Mucosa of descending colon (tissue), 3 donors: ENCODE measurements at regions of chr6 and their contacts with region 1.

Region 1: GRCh38 chr6:33700391-33701050 is 11.0 kb downstream of the UQCC2 start:
- DNase-seq: peak; percentile 82 to 87 (median 82)
- ATAC-seq: peak; percentile 88
- H3K4me3 ChIP-seq: no peak overlapping the region
- H3K4me1 ChIP-seq: no peaks in the 10 kb centered on the region
- CTCF ChIP-seq: peak; percentile 66

Region 2: DNA sequence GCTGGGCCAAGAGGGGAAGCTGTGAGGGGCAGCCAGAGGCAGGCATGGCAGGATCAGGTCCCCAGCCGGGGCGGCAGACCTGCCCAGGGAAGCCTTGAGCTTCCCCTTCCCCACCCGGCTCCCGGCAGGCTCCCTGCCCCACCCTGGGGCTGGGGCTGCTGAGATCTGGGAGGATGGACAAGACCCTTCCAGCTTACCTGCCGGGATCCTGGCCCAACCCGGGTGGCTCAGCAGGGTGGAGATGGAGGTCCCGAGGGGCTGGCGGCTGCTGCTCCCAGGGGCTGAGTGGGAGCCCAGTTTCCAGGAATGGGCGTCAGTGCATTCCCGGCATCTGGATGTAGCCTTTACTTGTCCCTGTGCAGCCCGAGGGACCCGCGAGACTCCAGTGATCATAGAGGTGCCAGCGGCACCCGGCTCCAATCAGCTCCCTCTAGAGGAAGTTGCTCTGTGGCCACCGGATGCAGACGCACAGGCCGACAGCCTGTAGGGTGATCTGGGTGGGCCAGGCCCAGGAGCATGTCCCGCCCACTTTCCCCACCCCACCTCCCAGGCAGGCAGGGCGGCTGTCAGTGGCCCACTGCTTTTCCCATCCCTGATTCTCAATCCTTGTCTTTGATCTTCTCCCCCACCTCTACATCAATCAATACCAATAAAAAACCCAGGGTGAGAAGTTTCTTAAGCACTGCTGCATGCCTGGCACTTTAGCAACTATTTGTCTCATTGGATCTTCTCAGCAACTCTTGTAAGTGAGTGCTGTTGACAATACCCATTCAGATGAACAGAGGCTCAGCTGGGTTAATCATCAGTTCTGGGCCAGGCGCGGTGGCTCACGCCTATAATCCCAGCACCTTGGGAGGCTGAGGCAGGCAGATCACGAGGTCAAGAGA is 120.5 kb before region 1 on chr6 and contains the start of gene BAK1:
- intact Hi-C with region 1: loop called in 1 of 2 experiments (anchors 10 kb)
- DNase-seq: peak; percentile 94 to 96 (median 96)
- ATAC-seq: peak; percentile 81
- H3K4me3 ChIP-seq: peak within 1 kb of the TSS; percentile 86
- H3K4me1 ChIP-seq: peaks cover 17% of the 10 kb centered on the region
- CTCF ChIP-seq: peak; percentile 46
- total RNA-seq, gene BAK1: 57.1 to 97.9 (median 90.5) TPM

Region 3: DNA sequence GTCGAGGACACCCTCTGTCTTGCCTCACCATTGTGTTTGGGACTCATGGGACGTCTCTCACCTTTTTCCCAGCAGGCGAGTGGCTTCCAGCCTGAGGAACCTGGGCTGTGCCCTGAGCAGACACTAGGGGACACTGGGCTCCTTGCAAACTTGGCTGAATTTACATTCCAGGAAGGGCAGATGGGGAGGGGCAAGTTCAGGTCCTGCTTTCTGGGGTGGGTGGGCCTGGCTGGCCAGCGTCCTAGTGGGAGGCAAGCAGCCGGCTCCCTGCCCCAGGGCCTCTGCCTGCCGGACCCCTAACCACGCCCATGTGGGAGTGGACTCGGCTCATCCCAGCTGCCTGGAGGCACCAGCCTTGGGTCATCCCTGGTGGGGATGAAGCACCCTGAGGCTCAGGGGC is 151.4 kb after region 1 on chr6:
- intact Hi-C with region 1: no loop called
- DNase-seq: peak in 2 of 3 donors; percentile 56
- ATAC-seq: peak; percentile 72
- H3K4me3 ChIP-seq: no peak overlapping the region
- H3K4me1 ChIP-seq: no peaks in the 10 kb centered on the region
- CTCF ChIP-seq: peak; percentile 30